Caco-2 (cell line): ENCODE measurements at regions of chr7 and their contacts with region 1.

Region 1: DNA sequence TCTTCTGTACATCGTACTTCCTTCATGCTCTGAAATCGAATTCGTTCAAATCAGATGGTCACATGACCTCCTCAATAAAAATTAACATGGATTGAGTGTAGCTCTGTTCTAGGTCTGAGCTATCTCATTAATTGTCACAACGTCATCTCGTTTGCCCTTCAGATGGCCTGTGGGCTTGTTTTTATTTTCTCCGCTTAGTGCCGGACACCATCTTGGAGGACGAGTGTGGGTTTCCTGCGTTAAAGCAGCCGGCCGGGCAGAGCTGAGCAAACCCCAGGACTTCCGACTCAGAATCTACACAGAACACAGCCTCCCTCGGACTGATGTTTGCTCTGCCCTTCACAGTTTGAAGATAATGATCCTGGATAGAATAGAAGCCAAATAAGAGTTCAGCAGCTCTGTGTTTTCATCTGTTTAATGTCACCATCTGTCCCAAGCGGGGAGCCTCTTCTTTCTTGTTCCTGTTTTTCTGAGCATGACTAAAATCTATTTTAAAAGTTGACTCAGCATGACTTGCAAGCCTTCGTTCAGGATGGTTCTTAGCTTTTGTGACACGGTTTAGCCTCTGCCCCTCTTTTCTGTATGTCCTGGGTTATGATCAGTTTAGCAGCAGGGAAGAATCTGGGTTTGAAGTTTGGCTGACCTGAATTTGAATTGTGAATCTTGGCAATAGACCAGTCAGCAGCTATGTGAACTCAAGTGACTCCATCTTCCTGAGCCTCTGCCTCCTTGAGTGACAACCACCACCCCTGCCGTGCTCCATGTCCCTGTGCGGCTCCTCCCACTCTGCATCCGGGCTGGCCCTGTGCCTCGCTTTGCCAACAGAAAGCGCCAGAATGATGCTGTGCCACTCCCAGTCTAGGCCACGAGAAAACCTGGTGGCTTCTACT is 30.6 kb upstream of the GALNTL5 start:
- DNase-seq: no peak
- H3K4me3 ChIP-seq: no peak overlapping the region
- H3K4me3 Mint-ChIP-seq: no peak overlapping the region
- H3K27ac Mint-ChIP-seq: peak overlapping the region; percentile 39
- H3K4me1 ChIP-seq: peaks cover 19% of the 10 kb centered on the region
- H3K4me1 Mint-ChIP-seq: peaks cover 24% of the 10 kb centered on the region
- H3K27me3 ChIP-seq: no peaks in the 10 kb centered on the region
- H3K27me3 Mint-ChIP-seq: no peaks in the 10 kb centered on the region
- CTCF ChIP-seq: no peak

Region 2: GRCh38 chr7:151900986-151901621 is 24.6 kb before region 1 on chr7:
- CTCF ChIA-PET with region 1: no interaction called
- POLR2A ChIA-PET with region 1: no interaction called
- intact Hi-C with region 1: loop called (anchors 2 kb)
- DNase-seq: peak in 1 of 2 experiments; percentile 5
- H3K4me3 ChIP-seq: no peak overlapping the region
- H3K4me3 Mint-ChIP-seq: no peak overlapping the region
- H3K27ac Mint-ChIP-seq: no peak overlapping the region
- H3K4me1 ChIP-seq: no peaks in the 10 kb centered on the region
- H3K4me1 Mint-ChIP-seq: no peaks in the 10 kb centered on the region
- H3K27me3 ChIP-seq: no peaks in the 10 kb centered on the region
- H3K27me3 Mint-ChIP-seq: peaks cover 14% of the 10 kb centered on the region
- CTCF ChIP-seq: no peak